Spleen (tissue), 13 donors: ENCODE measurements at regions of chr18 and their contacts with region 1.

Region 1: DNA sequence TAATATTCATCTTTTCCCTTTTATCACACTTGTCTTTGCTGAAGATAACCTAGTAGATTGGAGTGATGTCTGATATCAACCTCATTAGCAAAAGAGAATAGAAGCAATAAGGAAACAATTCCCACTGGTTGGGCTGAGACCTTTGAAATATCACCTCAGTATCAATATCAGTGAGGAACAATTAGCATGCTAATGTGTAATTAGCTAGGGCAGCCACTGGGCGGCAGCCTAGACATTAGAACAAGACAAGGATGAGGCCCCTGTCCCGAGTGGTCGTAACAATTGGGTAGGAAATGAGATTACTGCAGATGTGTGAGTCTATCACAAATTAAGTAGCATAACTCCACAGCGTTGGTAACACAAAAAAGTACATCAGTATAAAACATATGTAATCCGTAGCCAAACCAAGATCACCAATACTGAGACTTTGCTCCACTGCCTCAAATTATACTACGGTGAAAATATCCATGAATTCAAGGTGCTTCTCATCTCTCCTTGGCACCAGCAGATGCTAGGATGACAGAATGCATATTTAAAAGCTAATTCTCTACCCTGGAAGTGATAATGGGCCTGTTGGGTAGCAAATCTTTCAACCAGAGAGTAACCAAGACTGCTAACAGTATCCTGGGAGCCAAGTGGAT is 99.1 kb downstream of the ALPK2 start:
- DNase-seq: peak; percentile 84
- H3K4me3 ChIP-seq: no peak overlapping the region
- H3K27ac ChIP-seq: no peak overlapping the region
- H3K4me1 ChIP-seq: peaks cover 0 to 23% (median 9%) of the 10 kb centered on the region in 6 donors
- H3K27me3 ChIP-seq: peaks cover 0 to 5% (median 0%) of the 10 kb centered on the region in 7 donors
- CTCF ChIP-seq: peak; percentile 51 to 88 (median 81)
- POLR2A ChIP-seq: no peak

Region 2: DNA sequence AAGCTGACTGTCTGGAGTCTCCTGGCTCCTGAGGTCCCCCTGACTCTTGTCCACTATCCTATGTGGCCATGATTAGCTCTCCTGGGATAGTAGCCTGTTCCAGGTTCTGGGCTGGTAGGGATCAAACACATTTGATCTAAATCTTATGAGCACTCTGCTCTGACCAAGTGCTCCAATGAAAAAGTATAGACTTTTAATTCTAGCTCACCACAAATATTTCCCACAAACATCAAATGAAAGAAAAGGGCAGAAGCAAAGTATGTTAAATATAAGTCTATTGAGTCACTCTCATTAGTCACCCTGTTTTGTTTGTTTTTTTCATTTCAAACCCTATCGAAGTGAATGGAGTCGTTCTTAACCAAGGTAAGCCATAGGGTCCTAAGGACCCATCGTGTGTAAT is 525.5 kb before region 1 on chr18:
- intact Hi-C with region 1: no loop called
- DNase-seq: no peak
- H3K4me3 ChIP-seq: no peak overlapping the region
- H3K27ac ChIP-seq: no peak overlapping the region
- H3K4me1 ChIP-seq: no peaks in the 10 kb centered on the region
- H3K27me3 ChIP-seq: peaks cover 0 to 4% (median 0%) of the 10 kb centered on the region in 7 donors
- CTCF ChIP-seq: no peak
- POLR2A ChIP-seq: no peak

Region 3: DNA sequence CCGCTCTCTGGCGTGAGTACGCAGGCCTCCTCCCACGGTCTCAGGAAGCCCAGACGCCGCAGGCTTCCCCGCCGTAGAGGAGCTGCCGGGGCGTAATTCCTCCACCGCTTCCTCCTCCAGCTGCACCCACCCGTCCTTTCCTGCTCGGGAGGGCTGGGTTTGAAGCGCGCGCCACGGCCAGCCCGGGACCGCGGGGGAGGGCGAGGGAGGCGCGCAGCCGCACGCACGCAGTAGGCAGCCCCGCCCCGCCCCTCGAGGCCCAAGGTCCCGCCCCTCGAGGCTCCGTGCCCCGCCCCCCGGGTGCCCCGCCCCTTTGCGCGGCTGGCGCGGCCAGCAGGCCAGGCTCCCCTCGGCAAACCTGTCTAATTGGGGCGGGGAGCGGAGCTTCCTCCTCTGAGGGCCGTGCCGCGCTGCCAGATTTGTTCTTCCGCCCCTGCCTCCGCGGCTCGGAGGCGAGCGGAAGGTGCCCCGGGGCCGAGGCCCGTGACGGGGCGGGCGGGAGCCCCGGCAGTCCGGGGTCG is 141.3 kb after region 1 on chr18 and contains the start of gene MALT1:
- intact Hi-C with region 1: loop called (anchors 5 kb)
- DNase-seq: peak; percentile 99
- H3K4me3 ChIP-seq: peak within 1 kb of the TSS; percentile 55 to 85 (median 62)
- H3K27ac ChIP-seq: peak within 1 kb of the TSS; percentile 93 to 100 (median 96)
- H3K4me1 ChIP-seq: peaks cover 15 to 66% (median 40%) of the 10 kb centered on the region in 6 donors
- H3K27me3 ChIP-seq: no peaks in the 10 kb centered on the region
- CTCF ChIP-seq: peak in 2 of 11 experiments; percentile 6 to 11
- POLR2A ChIP-seq: peak; percentile 87 to 94 (median 91)
- total RNA-seq, gene MALT1: 47.9 to 59.6 (median 51.3) TPM

Region 4: DNA sequence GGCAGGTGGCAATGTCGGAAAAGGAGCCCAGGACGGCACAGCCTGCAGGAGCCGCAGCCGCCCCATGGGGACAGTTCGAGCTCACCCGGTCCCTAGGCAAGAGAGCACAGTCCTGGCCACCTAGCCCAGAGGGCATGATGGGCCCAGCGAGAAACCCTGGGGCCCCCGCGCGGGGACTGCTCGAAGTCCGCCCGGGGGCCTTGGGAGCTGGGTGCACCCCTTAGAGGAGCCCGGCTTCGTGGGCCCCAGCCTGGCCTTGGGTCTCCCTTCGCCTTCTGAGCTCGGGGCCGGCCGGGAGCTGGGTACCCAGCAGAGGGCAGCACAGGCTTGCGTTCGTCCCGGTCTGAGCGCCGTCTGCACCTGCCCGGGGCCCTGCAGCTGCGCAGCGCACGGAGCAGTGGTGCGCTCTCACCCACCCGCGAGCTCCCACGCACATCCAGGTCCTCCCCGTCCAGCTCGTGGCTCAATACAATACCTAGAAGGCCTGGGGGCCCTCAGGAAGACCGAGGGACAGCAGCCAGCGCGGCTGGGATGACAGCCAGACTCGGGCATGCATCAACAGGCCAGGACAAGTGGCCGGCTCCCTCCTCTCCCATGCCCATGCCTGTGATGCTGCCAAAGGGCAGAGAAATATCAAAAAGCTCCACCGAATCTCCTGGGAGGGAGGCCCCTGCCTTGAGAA is 238.6 kb after region 1 on chr18:
- intact Hi-C with region 1: loop called (anchors 2 kb)
- DNase-seq: peak; percentile 93
- H3K4me3 ChIP-seq: peak overlapping the region in 5 of 8 donors; percentile 8 to 61 (median 11)
- H3K27ac ChIP-seq: peak overlapping the region in 2 of 8 donors; percentile 24 to 32
- H3K4me1 ChIP-seq: peaks cover 10 to 39% (median 22%) of the 10 kb centered on the region in 6 donors
- H3K27me3 ChIP-seq: peaks cover 0 to 90% (median 16%) of the 10 kb centered on the region in 7 donors
- CTCF ChIP-seq: peak; percentile 51 to 91 (median 84)
- POLR2A ChIP-seq: no peak

Region 5: GRCh38 chr18:59070181-59070912 is 540.5 kb after region 1 on chr18:
- intact Hi-C with region 1: loop called (anchors 10 kb)
- DNase-seq: peak; percentile 91
- H3K4me3 ChIP-seq: no peak overlapping the region
- H3K27ac ChIP-seq: no peak overlapping the region
- H3K4me1 ChIP-seq: peaks cover 0 to 16% (median 6%) of the 10 kb centered on the region in 6 donors
- H3K27me3 ChIP-seq: peaks cover 0 to 4% (median 0%) of the 10 kb centered on the region in 7 donors
- CTCF ChIP-seq: peak; percentile 61 to 93 (median 77)
- POLR2A ChIP-seq: no peak